CD4-positive, alpha-beta T cell (primary cell): ENCODE measurements at regions of chr19 and their contacts with region 1.

Region 1: DNA sequence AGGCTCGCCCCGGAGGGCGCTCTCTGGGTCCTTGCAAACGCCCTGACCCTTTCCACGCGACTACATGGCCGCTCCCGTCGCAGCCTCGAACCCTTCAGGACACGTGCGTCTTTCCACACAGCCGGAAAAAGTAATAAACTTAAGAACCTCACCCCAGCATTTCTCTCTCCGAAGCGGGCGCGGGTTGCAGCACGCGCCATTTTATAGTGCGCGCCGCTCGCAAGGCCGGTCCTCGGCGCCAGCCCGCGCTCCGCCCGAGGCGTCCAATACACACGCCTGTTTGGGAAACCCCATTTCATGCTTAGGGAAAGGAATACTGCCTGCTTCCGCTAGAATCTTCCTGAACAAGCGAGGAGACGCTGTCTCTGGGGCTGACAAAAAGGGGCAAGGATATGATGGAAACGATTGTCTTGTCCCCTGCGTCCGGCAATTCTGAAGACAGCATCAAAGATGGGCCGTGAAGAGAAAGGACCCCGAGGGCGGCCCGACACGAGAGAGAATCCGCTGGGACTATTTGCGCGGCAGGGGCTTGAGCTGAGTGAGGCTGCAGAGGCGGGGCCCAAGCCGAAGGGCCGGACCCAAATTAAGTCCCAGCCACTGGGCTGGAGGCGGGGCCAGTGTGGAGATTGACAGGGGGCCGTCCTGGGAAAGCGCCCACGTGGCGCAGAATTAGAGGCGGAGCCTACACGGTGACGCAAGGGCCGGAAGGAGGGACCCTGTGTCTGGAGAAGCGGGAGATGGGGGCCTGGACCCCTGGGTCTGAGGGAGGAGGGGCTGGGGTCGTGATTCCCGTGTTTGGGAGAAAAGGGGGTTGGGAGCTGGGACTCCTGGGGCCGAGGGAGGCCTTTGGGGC is 14.4 kb downstream of the ACP4 start:
- DNase-seq: peak; percentile 94 to 99 (median 96)
- ATAC-seq: peak; percentile 94
- H3K4me3 ChIP-seq: peak overlapping the region; percentile 91
- H3K4me3 Mint-ChIP-seq: peak overlapping the region; percentile 99
- H3K27ac ChIP-seq: peak overlapping the region; percentile 99 to 100
- H3K27ac Mint-ChIP-seq: peak overlapping the region; percentile 97
- H3K4me1 ChIP-seq: peaks cover 31% of the 10 kb centered on the region
- H3K4me1 Mint-ChIP-seq: peaks cover 38% of the 10 kb centered on the region
- H3K27me3 ChIP-seq: no peaks in the 10 kb centered on the region
- H3K27me3 Mint-ChIP-seq: no peaks in the 10 kb centered on the region
- CTCF ChIP-seq: no peak

Region 2: DNA sequence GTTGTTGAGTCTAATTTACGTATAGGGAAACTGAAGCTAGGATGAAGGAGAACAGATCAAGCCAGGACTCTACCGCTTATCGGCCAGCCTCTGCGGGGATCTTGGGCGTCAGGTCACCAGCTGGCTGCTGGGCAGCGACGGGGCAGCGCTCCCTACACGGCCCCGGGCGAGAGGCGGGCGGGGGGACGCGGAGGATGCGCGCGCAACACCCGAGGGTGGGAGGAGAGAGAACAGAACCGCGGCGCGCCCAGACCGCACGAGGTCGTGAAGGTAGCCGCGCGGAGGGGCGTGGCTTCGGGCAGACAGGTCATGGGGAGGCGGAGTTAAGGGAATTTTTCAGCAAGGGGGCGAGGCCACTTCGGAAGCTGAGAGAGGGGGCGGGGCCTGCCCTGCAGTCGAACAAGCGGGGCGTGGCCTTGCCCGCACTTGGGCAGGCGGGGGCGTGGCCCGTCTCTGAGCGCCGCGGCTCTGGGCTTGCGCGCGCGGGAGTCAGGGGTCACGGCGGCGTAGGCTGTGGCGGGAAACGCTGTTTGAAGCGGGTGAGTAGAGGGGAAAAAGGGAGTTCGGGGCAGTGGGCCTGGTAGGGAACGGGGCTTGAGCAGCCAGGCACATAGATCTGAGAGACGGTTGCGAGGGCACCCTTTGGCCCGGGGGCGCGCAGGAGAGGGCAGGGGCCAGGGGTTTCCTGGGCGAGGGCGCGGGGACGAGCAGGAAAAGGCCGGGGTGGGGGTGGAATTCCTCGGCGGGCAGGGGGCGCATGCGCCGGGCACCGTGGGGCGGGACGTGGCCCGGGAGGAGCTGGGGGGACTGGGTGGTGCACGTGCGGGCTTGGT is 420.6 kb before region 1 on chr19 and contains the start of gene POLD1:
- CTCF ChIA-PET with region 1: no interaction called
- POLR2A ChIA-PET with region 1: no interaction called
- intact Hi-C with region 1: loop called in 1 of 2 experiments (anchors 2 kb)
- DNase-seq: peak; percentile 98 to 100 (median 99)
- ATAC-seq: peak; percentile 88
- H3K4me3 ChIP-seq: peak within 1 kb of the TSS; percentile 66
- H3K4me3 Mint-ChIP-seq: peak within 1 kb of the TSS; percentile 96
- H3K27ac ChIP-seq: peak within 1 kb of the TSS; percentile 70 to 81
- H3K27ac Mint-ChIP-seq: peak within 1 kb of the TSS; percentile 90
- H3K4me1 ChIP-seq: peaks cover 22% of the 10 kb centered on the region
- H3K4me1 Mint-ChIP-seq: peaks cover 38% of the 10 kb centered on the region
- H3K27me3 ChIP-seq: no peaks in the 10 kb centered on the region
- H3K27me3 Mint-ChIP-seq: peaks cover 6% of the 10 kb centered on the region
- CTCF ChIP-seq: no peak
- total RNA-seq, gene POLD1: 22.1 to 24.2 TPM

Region 3: GRCh38 chr19:50511068-50511822 is 293.4 kb before region 1 on chr19 and contains the start of gene JOSD2:
- CTCF ChIA-PET with region 1: no interaction called
- POLR2A ChIA-PET with region 1: interaction called, 9 read pairs
- intact Hi-C with region 1: loop called (anchors 1 to 2 kb)
- DNase-seq: peak; percentile 94 to 100 (median 96)
- ATAC-seq: peak; percentile 91
- H3K4me3 ChIP-seq: peak within 1 kb of the TSS; percentile 79
- H3K4me3 Mint-ChIP-seq: peak within 1 kb of the TSS; percentile 95
- H3K27ac ChIP-seq: peak within 1 kb of the TSS; percentile 63 to 91
- H3K27ac Mint-ChIP-seq: peak within 1 kb of the TSS; percentile 89
- H3K4me1 ChIP-seq: peaks cover 23% of the 10 kb centered on the region
- H3K4me1 Mint-ChIP-seq: peaks cover 15% of the 10 kb centered on the region
- H3K27me3 ChIP-seq: peaks cover 0 to 4% of the 10 kb centered on the region in 2 experiments
- H3K27me3 Mint-ChIP-seq: peaks cover 6% of the 10 kb centered on the region
- CTCF ChIP-seq: no peak
- total RNA-seq, gene JOSD2: 11.7 to 11.9 TPM

Region 4: GRCh38 chr19:51093101-51093500 is 288.5 kb after region 1 on chr19:
- CTCF ChIA-PET with region 1: no interaction called
- POLR2A ChIA-PET with region 1: no interaction called
- intact Hi-C with region 1: no loop called
- DNase-seq: no peak
- ATAC-seq: no peak
- H3K4me3 ChIP-seq: no peak overlapping the region
- H3K4me3 Mint-ChIP-seq: no peak overlapping the region
- H3K27ac ChIP-seq: no peak overlapping the region
- H3K27ac Mint-ChIP-seq: no peak overlapping the region
- H3K4me1 ChIP-seq: peaks cover 13% of the 10 kb centered on the region
- H3K4me1 Mint-ChIP-seq: peaks cover 10% of the 10 kb centered on the region
- H3K27me3 ChIP-seq: no peaks in the 10 kb centered on the region
- H3K27me3 Mint-ChIP-seq: no peaks in the 10 kb centered on the region
- CTCF ChIP-seq: no peak

Region 5: DNA sequence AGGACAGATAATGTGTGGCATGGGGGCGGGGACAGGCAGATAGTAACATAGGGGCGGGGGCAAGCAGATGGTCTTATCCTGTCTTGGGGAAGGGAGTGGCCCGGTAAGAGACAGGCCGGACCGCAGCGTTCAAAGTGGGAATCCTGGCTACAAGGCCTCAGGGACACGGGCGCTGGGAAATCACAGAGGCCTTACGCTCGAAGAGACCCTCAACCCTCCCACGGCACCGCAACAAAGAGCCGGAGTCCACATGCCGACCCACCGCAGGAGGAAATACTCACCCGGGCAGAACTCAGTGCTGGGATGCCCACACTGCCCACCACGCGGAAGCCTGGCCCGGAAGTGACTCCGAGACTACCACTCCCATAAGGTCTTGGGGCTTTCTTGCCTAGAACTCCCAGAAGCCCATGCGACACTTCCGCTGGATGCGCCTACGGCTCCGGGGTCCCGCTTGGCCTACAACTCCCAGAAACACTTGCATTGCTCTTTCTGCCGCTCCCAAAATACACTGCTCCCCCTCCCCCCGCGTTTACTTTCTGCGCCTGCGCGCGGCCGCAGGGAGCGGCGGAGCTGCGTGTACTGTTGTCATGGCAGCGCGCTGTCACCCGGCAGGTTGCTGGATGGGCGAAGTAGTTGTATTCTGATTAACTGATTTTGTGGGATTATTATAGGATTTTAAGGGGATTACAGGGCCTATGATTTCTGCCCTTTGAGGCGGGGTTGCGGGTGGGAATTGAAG is 303.6 kb after region 1 on chr19 and contains the start of gene CTU1:
- CTCF ChIA-PET with region 1: no interaction called
- POLR2A ChIA-PET with region 1: no interaction called
- intact Hi-C with region 1: loop called in 1 of 2 experiments (anchors 2 kb)
- DNase-seq: peak; percentile 96 to 100 (median 98)
- ATAC-seq: peak; percentile 98
- H3K4me3 ChIP-seq: peak within 1 kb of the TSS; percentile 83
- H3K4me3 Mint-ChIP-seq: peak within 1 kb of the TSS; percentile 95
- H3K27ac ChIP-seq: peak within 1 kb of the TSS; percentile 60 to 63
- H3K27ac Mint-ChIP-seq: peak within 1 kb of the TSS; percentile 91
- H3K4me1 ChIP-seq: peaks cover 29% of the 10 kb centered on the region
- H3K4me1 Mint-ChIP-seq: peaks cover 38% of the 10 kb centered on the region
- H3K27me3 ChIP-seq: no peaks in the 10 kb centered on the region
- H3K27me3 Mint-ChIP-seq: no peaks in the 10 kb centered on the region
- CTCF ChIP-seq: no peak
- total RNA-seq, gene CTU1: 1.4 to 1.6 TPM

Region 6: DNA sequence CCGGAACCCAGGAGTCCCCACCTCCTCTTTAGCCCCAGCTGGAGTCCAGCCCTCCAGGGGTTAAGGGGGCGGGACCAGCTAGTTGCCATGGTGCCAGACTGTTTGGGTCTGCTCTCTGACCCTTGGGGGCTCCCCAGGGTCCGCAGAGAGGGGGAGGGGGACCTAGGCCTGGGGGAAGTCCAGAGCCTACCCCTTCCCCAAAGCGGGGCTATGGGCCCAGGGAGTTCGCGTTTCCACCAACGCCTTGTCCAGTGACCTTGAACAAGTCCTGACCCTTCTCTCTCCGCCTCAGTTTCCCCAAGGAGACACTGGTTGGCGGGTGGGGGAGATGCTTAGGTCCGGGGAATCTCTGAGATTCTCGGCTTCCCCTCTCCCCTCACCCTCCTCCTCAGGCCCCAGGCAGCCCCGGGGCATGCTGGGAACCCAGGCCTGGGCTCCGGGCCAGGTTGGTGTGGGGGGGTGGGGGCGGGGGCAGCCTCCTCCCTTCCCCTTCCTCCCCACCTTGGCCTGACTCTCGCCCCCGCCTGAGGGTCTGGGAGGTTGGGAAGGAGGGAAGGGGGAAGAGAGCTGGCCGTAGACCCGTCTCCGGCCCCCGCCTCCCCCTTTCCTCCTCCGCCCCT is 885.9 kb after region 1 on chr19:
- CTCF ChIA-PET with region 1: no interaction called
- POLR2A ChIA-PET with region 1: no interaction called
- intact Hi-C with region 1: loop called in 1 of 2 experiments (anchors 10 kb)
- DNase-seq: peak; percentile 44 to 93 (median 66)
- ATAC-seq: peak; percentile 82
- H3K4me3 ChIP-seq: peak overlapping the region; percentile 75
- H3K4me3 Mint-ChIP-seq: peak overlapping the region; percentile 94
- H3K27ac ChIP-seq: peak overlapping the region; percentile 83 to 94
- H3K27ac Mint-ChIP-seq: peak overlapping the region; percentile 81
- H3K4me1 ChIP-seq: peaks cover 33% of the 10 kb centered on the region
- H3K4me1 Mint-ChIP-seq: peaks cover 18% of the 10 kb centered on the region
- H3K27me3 ChIP-seq: no peaks in the 10 kb centered on the region
- H3K27me3 Mint-ChIP-seq: no peaks in the 10 kb centered on the region
- CTCF ChIP-seq: no peak